Endothelial cell of umbilical vein (primary cell): ENCODE measurements at regions of chr17 and their contacts with region 1.

Region 1: GRCh38 chr17:17206124-17206912 is at the start of gene PLD6:
- DNase-seq: peak; percentile 68
- H3K4me3 ChIP-seq: peak within 1 kb of the TSS; percentile 36 to 53 (median 48)
- H3K27ac ChIP-seq: no peak within 1 kb of the TSS
- H3K4me1 ChIP-seq: peaks cover 13% of the 10 kb centered on the region
- H3K27me3 ChIP-seq: no peaks in the 10 kb centered on the region
- CTCF ChIP-seq: no peak
- POLR2A ChIP-seq: peak; percentile 45
- total RNA-seq, gene PLD6: 2.7 and 4.4 TPM in 2 replicates

Region 2: GRCh38 chr17:17229416-17230384 is 23.4 kb after region 1 on chr17:
- CTCF ChIA-PET with region 1: no interaction called
- POLR2A ChIA-PET with region 1: no interaction called
- dilution Hi-C with region 1: no loop called
- intact Hi-C with region 1: no loop called
- DNase-seq: no peak
- H3K4me3 ChIP-seq: no peak overlapping the region
- H3K27ac ChIP-seq: no peak overlapping the region
- H3K4me1 ChIP-seq: no peaks in the 10 kb centered on the region
- H3K27me3 ChIP-seq: no peaks in the 10 kb centered on the region
- CTCF ChIP-seq: no peak
- POLR2A ChIP-seq: no peak

Region 3: GRCh38 chr17:17289701-17290100 is 83.4 kb after region 1 on chr17:
- CTCF ChIA-PET with region 1: no interaction called
- POLR2A ChIA-PET with region 1: no interaction called
- dilution Hi-C with region 1: no loop called
- intact Hi-C with region 1: no loop called
- DNase-seq: no peak
- H3K4me3 ChIP-seq: no peak overlapping the region
- H3K27ac ChIP-seq: no peak overlapping the region
- H3K4me1 ChIP-seq: no peaks in the 10 kb centered on the region
- H3K27me3 ChIP-seq: peaks cover 0 to 2% of the 10 kb centered on the region in 2 experiments
- CTCF ChIP-seq: no peak
- POLR2A ChIP-seq: no peak

Region 4: DNA sequence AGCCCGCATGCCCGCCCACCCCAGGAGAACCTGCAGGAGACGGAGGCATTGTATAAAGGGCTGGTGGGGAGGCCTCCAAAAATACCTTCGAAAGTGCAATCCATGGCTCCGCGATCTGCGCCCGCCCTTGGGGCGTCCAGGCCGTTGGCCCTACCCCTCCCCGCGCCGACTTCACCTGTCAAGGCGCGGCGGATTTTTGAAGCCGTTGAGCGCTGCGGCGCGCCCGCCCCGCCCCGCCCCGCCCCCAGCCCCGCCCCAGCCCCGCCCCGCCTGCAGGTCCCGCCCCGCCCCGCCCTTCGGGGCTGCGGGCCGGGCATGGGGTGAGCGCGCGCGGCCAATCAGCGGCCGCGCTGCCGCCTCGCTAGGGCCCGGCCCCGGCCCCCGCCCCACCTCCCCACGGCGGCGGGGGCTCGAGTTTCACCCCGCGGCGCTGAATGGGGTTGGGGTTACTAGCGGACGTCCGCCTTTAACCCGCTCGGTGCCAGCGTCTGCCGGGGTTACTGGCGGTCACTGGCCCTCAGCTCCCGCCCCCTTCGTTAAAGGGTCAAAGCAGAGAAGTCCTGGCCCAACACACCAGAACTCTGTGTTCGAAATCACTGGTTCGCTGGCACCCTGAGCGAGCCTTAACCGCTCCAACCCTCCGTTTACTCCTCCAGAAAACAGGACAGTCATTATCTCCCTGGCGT is 617.3 kb after region 1 on chr17:
- CTCF ChIA-PET with region 1: no interaction called
- POLR2A ChIA-PET with region 1: no interaction called
- dilution Hi-C with region 1: no loop called
- intact Hi-C with region 1: loop called (anchors 5 kb)
- DNase-seq: peak; percentile 68
- H3K4me3 ChIP-seq: peak overlapping the region in 1 of 3 experiments; percentile 22
- H3K27ac ChIP-seq: peak overlapping the region; percentile 53
- H3K4me1 ChIP-seq: peaks cover 34% of the 10 kb centered on the region
- H3K27me3 ChIP-seq: no peaks in the 10 kb centered on the region
- CTCF ChIP-seq: no peak
- POLR2A ChIP-seq: no peak